Ovary (tissue), 10 donors: ENCODE measurements at regions of chr17 and their contacts with region 1.

Region 1: GRCh38 chr17:78250891-78251794 is 19.7 kb downstream of the TMEM235 start:
- DNase-seq: peak; percentile 80 to 91 (median 88)
- H3K4me3 ChIP-seq: no peak overlapping the region
- H3K27ac ChIP-seq: no peak overlapping the region
- H3K4me1 ChIP-seq: peaks cover 3% of the 10 kb centered on the region
- H3K27me3 ChIP-seq: no peaks in the 10 kb centered on the region
- CTCF ChIP-seq: peak; percentile 96 to 100 (median 96)
- EP300 ChIP-seq: no peak
- POLR2A ChIP-seq: no peak

Region 2: GRCh38 chr17:78112518-78113226 is 138.5 kb before region 1 on chr17:
- intact Hi-C with region 1: loop called (anchors 5 kb)
- DNase-seq: peak; percentile 58 to 87 (median 79)
- H3K4me3 ChIP-seq: no peak overlapping the region
- H3K27ac ChIP-seq: no peak overlapping the region
- H3K4me1 ChIP-seq: no peaks in the 10 kb centered on the region
- H3K27me3 ChIP-seq: no peaks in the 10 kb centered on the region
- CTCF ChIP-seq: peak; percentile 96 to 99 (median 97)
- EP300 ChIP-seq: no peak
- POLR2A ChIP-seq: no peak

Region 3: DNA sequence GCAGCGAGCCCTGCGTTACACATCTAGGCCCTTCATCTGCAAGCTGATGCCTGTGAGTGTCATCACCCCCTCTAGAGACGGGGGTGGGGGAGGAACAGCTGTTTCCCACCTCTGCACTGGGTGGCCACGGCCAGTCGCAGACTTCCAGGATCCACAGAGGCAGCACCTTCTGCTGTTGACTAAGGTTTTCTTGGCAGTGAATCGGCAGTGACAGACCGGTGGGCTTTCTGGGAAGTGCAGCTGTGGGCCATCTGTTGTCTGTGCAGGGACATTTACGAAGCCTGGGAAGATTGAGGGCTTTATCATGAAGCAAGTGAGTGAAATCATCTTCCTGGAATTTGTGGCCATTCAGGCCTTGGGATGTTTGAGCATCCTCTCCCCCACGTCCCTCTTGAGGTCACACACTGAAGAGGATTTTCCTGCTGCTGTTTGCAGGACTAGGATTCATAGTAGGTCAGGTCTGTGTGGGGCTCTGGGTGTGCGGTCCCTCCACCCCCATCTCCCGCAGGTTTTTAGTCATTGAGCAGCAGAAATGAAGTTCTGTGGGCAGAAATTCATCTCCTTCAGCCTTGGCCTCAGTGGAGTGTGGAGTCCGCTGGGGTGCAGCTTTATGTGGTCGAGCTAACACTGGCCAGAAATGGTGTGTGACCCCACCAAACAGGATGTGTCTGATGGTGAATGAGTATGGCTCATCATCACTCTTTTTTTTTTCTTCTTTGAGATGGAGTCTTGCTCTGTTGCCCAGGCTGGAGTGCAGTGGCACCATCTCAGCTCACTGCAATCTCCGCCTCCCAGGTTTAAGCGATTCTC is 139.3 kb after region 1 on chr17:
- intact Hi-C with region 1: no loop called
- DNase-seq: no peak
- H3K4me3 ChIP-seq: no peak overlapping the region
- H3K27ac ChIP-seq: no peak overlapping the region
- H3K4me1 ChIP-seq: peaks cover 3% of the 10 kb centered on the region
- H3K27me3 ChIP-seq: no peaks in the 10 kb centered on the region
- CTCF ChIP-seq: no peak
- EP300 ChIP-seq: no peak
- POLR2A ChIP-seq: no peak

Region 4: GRCh38 chr17:78412403-78412802 is 161.3 kb after region 1 on chr17:
- intact Hi-C with region 1: no loop called
- DNase-seq: no peak
- H3K4me3 ChIP-seq: no peak overlapping the region
- H3K27ac ChIP-seq: no peak overlapping the region
- H3K4me1 ChIP-seq: no peaks in the 10 kb centered on the region
- H3K27me3 ChIP-seq: no peaks in the 10 kb centered on the region
- CTCF ChIP-seq: no peak
- EP300 ChIP-seq: no peak
- POLR2A ChIP-seq: no peak